ENCODE measurements at regions of chr18 and their contacts with region 1.

Region 1: GRCh38 chr18:22933206-22933957 is at the start of gene RBBP8:
- DNase-seq: peak; percentile 64 to 88 (median 77)
- ATAC-seq: peak; percentile 72
- H3K4me3 ChIP-seq: peak within 1 kb of the TSS; percentile 75 to 80
- H3K4me3 Mint-ChIP-seq: peak within 1 kb of the TSS; percentile 87
- H3K27ac ChIP-seq: peak within 1 kb of the TSS; percentile 73 to 88
- H3K27ac Mint-ChIP-seq: peak within 1 kb of the TSS; percentile 60
- H3K4me1 ChIP-seq: peaks cover 4% of the 10 kb centered on the region
- H3K4me1 Mint-ChIP-seq: peaks cover 14% of the 10 kb centered on the region
- H3K27me3 ChIP-seq: no peaks in the 10 kb centered on the region
- H3K27me3 Mint-ChIP-seq: no peaks in the 10 kb centered on the region
- CTCF ChIP-seq: no peak
- total RNA-seq, gene RBBP8: 4.0 to 5.1 TPM

Region 2: DNA sequence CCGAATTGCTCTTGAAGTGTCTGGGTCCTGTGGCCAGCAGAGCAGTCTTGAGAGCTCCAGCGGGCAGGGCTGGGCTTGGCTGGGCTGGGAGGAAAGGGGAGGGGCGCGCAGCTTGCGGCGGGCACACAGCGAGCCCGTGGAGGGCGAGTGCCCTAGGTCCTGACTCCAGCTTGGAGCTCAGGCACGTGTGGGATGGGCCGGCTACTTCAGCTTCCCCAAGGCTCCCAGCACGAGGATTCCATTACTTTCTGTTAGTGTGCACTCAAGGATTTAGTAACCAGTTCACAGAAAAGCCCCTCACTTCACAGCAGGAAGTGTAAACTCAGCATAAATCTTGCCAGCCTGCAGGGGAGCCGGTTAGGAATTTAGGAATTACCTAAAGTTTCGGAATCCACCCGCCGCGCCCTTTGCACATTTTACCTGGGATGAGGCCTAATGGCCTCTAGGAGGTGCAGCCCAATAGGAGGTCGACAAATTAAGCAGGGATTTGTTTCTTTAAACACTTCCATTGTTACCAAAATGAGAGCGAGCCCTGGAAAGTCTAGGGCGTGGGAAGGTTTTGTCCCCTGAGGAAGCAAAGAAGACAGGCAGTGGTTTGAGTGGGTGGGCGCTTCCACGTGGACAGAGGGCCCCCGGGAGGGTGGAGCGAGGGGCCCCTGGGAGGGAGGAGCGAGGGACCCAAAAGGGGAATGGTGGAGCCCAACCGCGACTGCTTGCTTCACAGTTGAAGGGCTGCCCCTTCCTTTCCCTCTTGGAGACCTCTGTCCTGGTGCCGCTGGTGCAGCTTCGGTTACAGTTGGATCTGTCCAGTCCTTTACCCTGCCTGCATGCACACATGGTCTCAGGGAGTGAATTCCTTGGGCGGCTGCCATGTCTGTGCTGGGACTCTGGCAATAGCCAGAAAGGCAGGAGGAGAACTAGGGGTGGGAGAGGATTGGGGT is 608.9 kb before region 1 on chr18:
- CTCF ChIA-PET with region 1: no interaction called
- POLR2A ChIA-PET with region 1: no interaction called
- intact Hi-C with region 1: no loop called
- DNase-seq: peak in 3 of 9 experiments; percentile 25 to 37 (median 34)
- ATAC-seq: peak; percentile 49
- H3K4me3 ChIP-seq: peak overlapping the region; percentile 29 to 43
- H3K4me3 Mint-ChIP-seq: peak overlapping the region; percentile 76
- H3K27ac ChIP-seq: peak overlapping the region in 1 of 2 experiments; percentile 5
- H3K27ac Mint-ChIP-seq: peak overlapping the region; percentile 15
- H3K4me1 ChIP-seq: peaks cover 4% of the 10 kb centered on the region
- H3K4me1 Mint-ChIP-seq: peaks cover 3% of the 10 kb centered on the region
- H3K27me3 ChIP-seq: no peaks in the 10 kb centered on the region
- H3K27me3 Mint-ChIP-seq: no peaks in the 10 kb centered on the region
- CTCF ChIP-seq: no peak

Region 3: DNA sequence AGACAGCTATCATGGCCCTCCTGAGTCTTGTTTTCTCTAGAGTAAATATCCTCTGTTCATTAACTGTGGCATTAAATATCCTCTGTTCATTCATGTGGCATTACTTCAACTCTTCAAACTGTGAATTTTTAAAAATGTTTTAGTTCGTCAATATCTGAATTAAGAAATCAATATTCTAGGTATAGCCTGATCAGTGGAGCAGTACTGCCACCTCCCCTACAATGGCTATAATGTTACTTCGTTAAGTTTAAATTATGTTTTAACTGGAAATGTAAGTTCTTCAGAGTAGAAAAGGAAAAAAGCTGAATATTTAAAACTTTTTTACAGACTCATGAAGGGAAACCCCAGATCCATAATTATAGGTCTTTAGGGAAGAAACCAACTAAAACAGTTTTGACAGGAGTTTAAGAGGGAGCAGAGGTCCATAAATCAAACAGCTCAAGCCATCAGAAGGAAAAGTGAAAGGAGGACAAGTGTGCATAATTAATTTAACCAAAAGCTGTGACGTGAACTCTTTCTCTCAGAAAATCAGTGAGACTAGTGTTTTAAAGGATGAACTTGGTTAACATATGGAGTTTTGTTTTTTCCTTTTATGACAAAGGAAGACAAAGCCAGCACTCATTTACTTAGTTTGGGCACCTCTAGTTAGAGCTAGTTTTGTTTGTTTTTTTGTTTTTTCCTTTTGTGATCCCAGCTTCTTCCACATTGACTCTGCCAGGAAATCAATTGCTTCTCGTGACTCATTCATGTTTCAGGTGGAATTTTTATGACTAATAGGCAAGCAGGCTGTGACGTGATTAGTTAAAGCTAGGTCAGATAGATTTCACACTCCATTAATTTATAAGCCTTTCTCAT is 44.7 kb after region 1 on chr18:
- CTCF ChIA-PET with region 1: interaction called, 52 read pairs
- POLR2A ChIA-PET with region 1: no interaction called
- intact Hi-C with region 1: loop called (anchors 1 kb)
- DNase-seq: peak in 1 of 9 experiments; percentile 37
- ATAC-seq: no peak
- H3K4me3 ChIP-seq: no peak overlapping the region
- H3K4me3 Mint-ChIP-seq: no peak overlapping the region
- H3K27ac ChIP-seq: no peak overlapping the region
- H3K27ac Mint-ChIP-seq: no peak overlapping the region
- H3K4me1 ChIP-seq: no peaks in the 10 kb centered on the region
- H3K4me1 Mint-ChIP-seq: no peaks in the 10 kb centered on the region
- H3K27me3 ChIP-seq: no peaks in the 10 kb centered on the region
- H3K27me3 Mint-ChIP-seq: no peaks in the 10 kb centered on the region
- CTCF ChIP-seq: no peak

Region 4: GRCh38 chr18:23071285-23071684 is 137.9 kb after region 1 on chr18:
- CTCF ChIA-PET with region 1: no interaction called
- POLR2A ChIA-PET with region 1: no interaction called
- intact Hi-C with region 1: loop called (anchors 2 kb)
- DNase-seq: peak; percentile 63 to 95 (median 86)
- ATAC-seq: peak; percentile 92
- H3K4me3 ChIP-seq: peak overlapping the region in 1 of 2 experiments; percentile 8
- H3K4me3 Mint-ChIP-seq: peak overlapping the region; percentile 71
- H3K27ac ChIP-seq: peak overlapping the region in 1 of 2 experiments; percentile 37
- H3K27ac Mint-ChIP-seq: peak overlapping the region; percentile 85
- H3K4me1 ChIP-seq: peaks cover 52% of the 10 kb centered on the region
- H3K4me1 Mint-ChIP-seq: peaks cover 66% of the 10 kb centered on the region
- H3K27me3 ChIP-seq: no peaks in the 10 kb centered on the region
- H3K27me3 Mint-ChIP-seq: no peaks in the 10 kb centered on the region
- CTCF ChIP-seq: no peak

Region 5: GRCh38 chr18:23231340-23232021 is 298.1 kb after region 1 on chr18:
- CTCF ChIA-PET with region 1: no interaction called
- POLR2A ChIA-PET with region 1: no interaction called
- intact Hi-C with region 1: loop called in 1 of 2 experiments (anchors 10 kb)
- DNase-seq: peak; percentile 41 to 95 (median 66)
- ATAC-seq: peak; percentile 85
- H3K4me3 ChIP-seq: no peak overlapping the region
- H3K4me3 Mint-ChIP-seq: peak overlapping the region; percentile 9
- H3K27ac ChIP-seq: peak overlapping the region; percentile 5 to 84
- H3K27ac Mint-ChIP-seq: peak overlapping the region; percentile 92
- H3K4me1 ChIP-seq: peaks cover 11% of the 10 kb centered on the region
- H3K4me1 Mint-ChIP-seq: peaks cover 23% of the 10 kb centered on the region
- H3K27me3 ChIP-seq: no peaks in the 10 kb centered on the region
- H3K27me3 Mint-ChIP-seq: no peaks in the 10 kb centered on the region
- CTCF ChIP-seq: no peak

Region 6: GRCh38 chr18:23406271-23406787 is 472.9 kb after region 1 on chr18:
- CTCF ChIA-PET with region 1: interaction called, 25 read pairs
- POLR2A ChIA-PET with region 1: no interaction called
- intact Hi-C with region 1: loop called in 1 of 2 experiments (anchors 2 kb)
- DNase-seq: no peak
- ATAC-seq: no peak
- H3K4me3 ChIP-seq: no peak overlapping the region
- H3K4me3 Mint-ChIP-seq: no peak overlapping the region
- H3K27ac ChIP-seq: no peak overlapping the region
- H3K27ac Mint-ChIP-seq: no peak overlapping the region
- H3K4me1 ChIP-seq: no peaks in the 10 kb centered on the region
- H3K4me1 Mint-ChIP-seq: no peaks in the 10 kb centered on the region
- H3K27me3 ChIP-seq: no peaks in the 10 kb centered on the region
- H3K27me3 Mint-ChIP-seq: no peaks in the 10 kb centered on the region
- CTCF ChIP-seq: no peak

Region 7: DNA sequence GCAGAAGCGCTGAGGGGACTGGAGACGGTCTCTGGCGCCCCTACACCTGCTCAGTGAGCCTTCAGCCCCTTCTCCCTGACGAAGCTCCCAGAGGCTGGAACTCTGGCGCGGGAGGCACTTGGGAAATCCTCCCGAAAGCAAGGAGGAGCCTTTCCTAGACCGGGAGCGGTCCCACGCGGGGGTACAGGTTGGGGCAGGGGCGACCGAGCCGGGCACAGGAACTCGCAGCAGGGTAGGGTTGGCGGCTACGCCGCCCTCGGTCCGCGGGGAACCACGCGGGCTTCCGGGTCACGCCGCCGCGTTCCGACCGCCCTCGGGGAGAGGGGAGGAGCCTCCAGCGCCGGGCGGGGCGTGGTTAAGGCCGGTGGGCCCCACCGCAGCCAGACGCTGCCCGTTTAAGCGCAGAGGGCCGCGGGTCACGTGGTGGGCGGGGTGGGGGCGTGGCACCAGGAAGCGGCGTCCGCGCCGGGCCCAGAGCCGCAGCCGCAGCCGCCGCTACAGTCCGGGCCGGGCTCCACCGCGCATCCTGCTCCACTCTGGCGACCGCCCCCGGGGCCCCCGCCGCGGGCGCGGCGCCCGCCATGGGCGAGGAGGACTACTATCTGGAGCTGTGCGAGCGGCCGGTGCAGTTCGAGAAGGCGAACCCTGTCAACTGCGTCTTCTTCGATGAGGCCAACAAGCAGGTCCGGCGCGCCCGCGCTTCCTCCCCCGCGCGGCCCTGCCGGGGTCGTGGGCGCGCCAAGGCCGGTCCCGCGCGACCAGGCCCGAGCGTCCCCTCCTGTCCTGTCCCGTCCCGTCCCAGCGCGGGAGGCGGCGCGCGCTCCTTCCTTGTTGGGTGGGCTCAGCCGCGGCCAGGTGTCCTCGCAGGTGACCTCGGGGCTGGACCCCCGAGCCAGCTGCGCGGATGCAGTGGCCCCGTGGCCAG is 569.9 kb after region 1 on chr18 and contains the start of gene RMC1:
- CTCF ChIA-PET with region 1: no interaction called
- POLR2A ChIA-PET with region 1: no interaction called
- intact Hi-C with region 1: loop called in 1 of 2 experiments (anchors 5 kb)
- DNase-seq: peak; percentile 94 to 99 (median 98)
- ATAC-seq: peak; percentile 91
- H3K4me3 ChIP-seq: peak within 1 kb of the TSS; percentile 73 to 91
- H3K4me3 Mint-ChIP-seq: peak within 1 kb of the TSS; percentile 93
- H3K27ac ChIP-seq: peak within 1 kb of the TSS; percentile 83 to 88
- H3K27ac Mint-ChIP-seq: peak within 1 kb of the TSS; percentile 92
- H3K4me1 ChIP-seq: peaks cover 35% of the 10 kb centered on the region
- H3K4me1 Mint-ChIP-seq: peaks cover 49% of the 10 kb centered on the region
- H3K27me3 ChIP-seq: no peaks in the 10 kb centered on the region
- H3K27me3 Mint-ChIP-seq: no peaks in the 10 kb centered on the region
- CTCF ChIP-seq: no peak
- total RNA-seq, gene RMC1: 59.8 to 62.2 TPM

Region 8: GRCh38 chr18:24426398-24427294 is 1493.3 kb after region 1 on chr18 and contains the start of gene IMPACT:
- CTCF ChIA-PET with region 1: no interaction called
- POLR2A ChIA-PET with region 1: no interaction called
- intact Hi-C with region 1: loop called in 1 of 2 experiments (anchors 5 kb)
- DNase-seq: peak; percentile 56 to 90 (median 76)
- ATAC-seq: peak; percentile 83
- H3K4me3 ChIP-seq: peak within 1 kb of the TSS; percentile 73 to 81
- H3K4me3 Mint-ChIP-seq: peak within 1 kb of the TSS; percentile 87
- H3K27ac ChIP-seq: peak within 1 kb of the TSS; percentile 43 to 64
- H3K27ac Mint-ChIP-seq: peak within 1 kb of the TSS; percentile 92
- H3K4me1 ChIP-seq: peaks cover 24% of the 10 kb centered on the region
- H3K4me1 Mint-ChIP-seq: peaks cover 21% of the 10 kb centered on the region
- H3K27me3 ChIP-seq: peaks cover 0 to 3% of the 10 kb centered on the region in 2 experiments
- H3K27me3 Mint-ChIP-seq: peaks cover 25% of the 10 kb centered on the region
- CTCF ChIP-seq: no peak
- total RNA-seq, gene IMPACT: 6.5 to 10.0 TPM

Measured in CD8-positive, alpha-beta T cell (primary cell).